Transverse colon (tissue), 4 donors: ENCODE measurements at regions of chr11 and their contacts with region 1.

Region 1: DNA sequence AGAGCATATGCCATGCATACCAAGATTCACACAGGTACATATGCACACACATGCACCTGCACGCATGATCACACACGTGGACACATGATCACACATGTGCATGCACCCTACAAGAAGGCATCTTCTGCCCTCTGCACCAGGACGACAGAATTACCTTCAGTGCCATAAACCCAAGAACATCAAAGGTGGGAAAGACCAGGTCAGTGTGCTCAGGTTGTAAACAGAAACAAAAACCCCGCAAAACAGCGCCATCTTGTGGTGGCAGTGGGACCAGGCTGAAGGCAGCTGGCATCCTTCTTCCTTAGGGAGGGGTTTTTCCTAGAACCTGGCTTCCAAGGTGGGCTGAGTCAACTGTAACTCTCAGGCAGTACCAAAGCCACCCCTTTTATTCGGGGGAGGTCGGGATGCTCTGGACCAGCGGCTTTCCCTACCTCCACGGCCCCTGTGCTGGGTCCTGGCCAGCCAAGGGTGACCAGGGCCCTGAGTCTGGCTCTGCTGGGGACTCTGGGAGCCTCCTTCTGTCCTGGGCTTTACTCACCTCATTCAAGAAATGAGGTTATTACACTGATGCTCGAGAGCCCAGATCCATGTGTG is 69.4 kb upstream of the FGF3 start:
- DNase-seq: peak; percentile 84
- H3K4me3 ChIP-seq: no peak overlapping the region
- H3K27ac ChIP-seq: no peak overlapping the region
- H3K4me1 ChIP-seq: peaks cover 14 to 33% (median 27%) of the 10 kb centered on the region in 4 donors
- H3K27me3 ChIP-seq: no peaks in the 10 kb centered on the region
- CTCF ChIP-seq: peak; percentile 85 to 93 (median 91)
- EP300 ChIP-seq: no peak
- POLR2A ChIP-seq: no peak

Region 2: DNA sequence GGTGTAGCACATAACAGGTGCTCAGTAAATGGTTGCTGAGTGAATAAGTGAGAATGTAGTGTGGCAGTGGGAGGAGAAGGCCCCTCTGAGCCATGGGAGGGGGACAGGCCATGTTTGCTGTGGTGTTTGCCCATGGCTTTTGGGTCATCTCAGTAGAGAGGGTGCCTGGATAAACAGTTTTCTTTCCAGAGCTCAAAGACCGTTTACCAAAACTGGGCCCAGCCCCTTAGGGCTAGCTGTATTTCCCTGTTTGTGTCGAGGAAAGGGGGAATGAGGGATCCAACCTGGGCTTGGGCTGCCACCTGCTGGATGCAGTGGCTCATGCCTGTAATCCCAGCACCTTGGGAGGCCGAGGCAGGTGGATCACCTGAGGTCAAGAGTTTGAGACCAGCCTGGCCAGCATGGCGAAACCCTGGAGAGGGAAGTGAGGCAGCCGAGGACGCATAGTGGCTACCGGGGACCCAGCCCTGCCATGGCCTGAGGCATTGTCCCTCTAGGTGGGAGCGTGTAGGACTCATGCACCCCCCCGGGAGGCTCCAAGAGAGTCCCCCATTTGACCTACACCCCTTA is 204.7 kb before region 1 on chr11:
- in situ Hi-C with region 1: loop called in 1 of 4 experiments (anchors 10 kb)
- intact Hi-C with region 1: loop called (anchors 5 kb)
- DNase-seq: peak; percentile 27
- H3K4me3 ChIP-seq: no peak overlapping the region
- H3K27ac ChIP-seq: no peak overlapping the region
- H3K4me1 ChIP-seq: peaks cover 0 to 5% (median 2%) of the 10 kb centered on the region in 4 donors
- H3K27me3 ChIP-seq: peaks cover 9% of the 10 kb centered on the region
- CTCF ChIP-seq: peak in 4 of 5 experiments; percentile 29 to 55 (median 36)
- EP300 ChIP-seq: no peak
- POLR2A ChIP-seq: no peak

Region 3: DNA sequence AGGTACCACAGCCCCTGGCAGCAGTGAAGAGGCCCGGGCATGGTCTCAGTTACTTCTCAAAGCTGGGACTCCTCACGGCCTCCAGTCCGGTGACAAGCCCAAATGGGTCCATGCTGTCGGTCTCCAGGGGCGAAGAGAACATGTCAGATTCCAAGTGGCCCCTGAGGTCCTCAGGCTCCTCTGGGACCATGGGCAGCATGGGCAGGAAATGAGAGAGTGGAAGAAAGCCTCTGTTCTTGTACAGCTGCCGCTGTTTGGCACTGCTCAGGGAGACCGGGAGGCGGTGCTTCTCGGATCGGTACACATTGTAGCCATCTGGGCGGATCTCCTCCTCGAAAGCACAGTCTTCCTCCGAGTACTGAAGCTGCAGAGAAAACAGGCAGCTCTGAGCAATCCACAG is 189.4 kb before region 1 on chr11:
- in situ Hi-C with region 1: loop called in 2 of 4 experiments (anchors 10 to 25 kb)
- intact Hi-C with region 1: no loop called
- DNase-seq: no peak
- H3K4me3 ChIP-seq: no peak overlapping the region
- H3K27ac ChIP-seq: no peak overlapping the region
- H3K4me1 ChIP-seq: peaks cover 4 to 11% (median 6%) of the 10 kb centered on the region in 4 donors
- H3K27me3 ChIP-seq: peaks cover 91% of the 10 kb centered on the region
- CTCF ChIP-seq: no peak
- EP300 ChIP-seq: no peak
- POLR2A ChIP-seq: no peak

Region 4: GRCh38 chr11:69718147-69718546 is 170.4 kb before region 1 on chr11:
- in situ Hi-C with region 1: loop called in 1 of 4 experiments (anchors 25 kb)
- intact Hi-C with region 1: no loop called
- DNase-seq: no peak
- H3K4me3 ChIP-seq: no peak overlapping the region
- H3K27ac ChIP-seq: no peak overlapping the region
- H3K4me1 ChIP-seq: no peaks in the 10 kb centered on the region
- H3K27me3 ChIP-seq: peaks cover 70% of the 10 kb centered on the region
- CTCF ChIP-seq: peak in 3 of 5 experiments; percentile 10 to 26 (median 17)
- EP300 ChIP-seq: no peak
- POLR2A ChIP-seq: no peak

Region 5: GRCh38 chr11:69854719-69855118 is 33.9 kb before region 1 on chr11:
- in situ Hi-C with region 1: no loop called
- intact Hi-C with region 1: no loop called
- DNase-seq: no peak
- H3K4me3 ChIP-seq: no peak overlapping the region
- H3K27ac ChIP-seq: no peak overlapping the region
- H3K4me1 ChIP-seq: no peaks in the 10 kb centered on the region
- H3K27me3 ChIP-seq: peaks cover 70% of the 10 kb centered on the region
- CTCF ChIP-seq: no peak
- EP300 ChIP-seq: no peak
- POLR2A ChIP-seq: no peak